ENCODE measurements at regions of chr16 and their contacts with region 1.

Region 1: DNA sequence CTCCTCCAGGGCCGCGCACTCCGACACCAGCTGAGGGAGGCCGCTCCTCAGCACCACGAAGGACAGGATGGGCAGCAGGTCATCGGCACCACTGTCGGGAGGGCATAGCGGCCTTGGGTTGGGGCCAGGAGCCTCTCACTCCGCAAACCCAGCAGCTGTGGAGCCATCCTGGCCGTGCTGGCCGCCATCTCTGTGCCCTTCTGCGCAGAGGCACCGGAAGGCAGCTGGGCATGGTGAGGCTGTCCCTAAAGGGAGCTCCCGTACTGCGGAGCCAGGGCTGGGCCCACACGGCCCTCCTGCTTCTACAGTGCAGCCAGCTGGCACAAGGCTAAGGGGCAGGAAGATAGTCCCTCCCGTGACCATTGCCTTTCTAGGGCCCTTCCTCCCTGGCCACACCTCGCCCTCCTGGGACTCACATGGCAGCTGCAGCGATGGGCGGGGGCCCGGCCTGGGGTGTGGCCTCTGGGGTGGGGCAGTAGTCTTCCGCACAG is 7.0 kb upstream of the SPATA2L start:
- DNase-seq: no peak
- ATAC-seq: peak in 4 of 8 donors; percentile 1 to 56 (median 12)
- H3K4me3 ChIP-seq: no peak overlapping the region
- H3K27ac ChIP-seq: no peak overlapping the region
- H3K4me1 ChIP-seq: peaks cover 0 to 20% (median 11%) of the 10 kb centered on the region in 9 donors
- H3K27me3 ChIP-seq: peaks cover 0 to 12% (median 6%) of the 10 kb centered on the region in 7 donors
- CTCF ChIP-seq: no peak

Region 2: DNA sequence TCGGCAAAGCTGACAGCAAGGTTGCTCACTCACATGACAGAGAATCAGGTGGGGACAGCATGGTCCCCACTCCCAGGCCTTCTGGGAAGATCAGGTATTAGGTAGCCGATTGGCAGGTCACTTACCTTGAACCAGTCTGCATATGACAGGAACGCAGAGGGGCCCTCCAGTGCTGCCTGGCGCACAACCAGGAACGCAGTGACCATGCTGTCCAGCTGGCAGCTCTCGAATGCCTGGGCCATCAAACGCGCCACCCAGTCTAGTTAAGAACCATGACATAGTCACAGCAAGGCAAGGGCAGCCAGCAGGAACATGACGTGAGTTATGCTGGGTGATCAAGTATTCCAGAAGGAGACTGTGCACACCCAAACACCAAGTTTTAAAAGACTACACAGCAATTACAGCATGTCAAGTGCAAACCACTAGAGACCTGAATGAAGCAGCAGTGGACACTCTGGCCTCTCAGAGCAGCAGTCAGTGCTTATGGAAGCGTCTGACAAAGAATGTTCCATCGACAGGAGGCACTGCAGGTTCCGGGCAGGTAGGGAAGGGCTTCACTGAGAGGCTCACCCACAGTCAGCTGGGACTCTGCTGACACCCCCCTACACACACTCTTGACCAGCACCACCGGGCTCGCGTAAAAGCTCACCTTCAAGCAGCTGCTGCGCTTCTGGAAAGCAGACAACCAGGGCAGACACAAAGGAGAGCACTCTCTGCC is 83.0 kb after region 1 on chr16:
- intact Hi-C with region 1: loop called in 9 of 10 experiments (anchors 5 to 10 kb)
- DNase-seq: peak in 1 of 2 donors; percentile 26
- ATAC-seq: peak in 6 of 8 donors; percentile 18 to 75 (median 44)
- H3K4me3 ChIP-seq: no peak overlapping the region
- H3K27ac ChIP-seq: no peak overlapping the region
- H3K4me1 ChIP-seq: peaks cover 0 to 3% (median 0%) of the 10 kb centered on the region in 9 donors
- H3K27me3 ChIP-seq: no peaks in the 10 kb centered on the region
- CTCF ChIP-seq: no peak

Region 3: DNA sequence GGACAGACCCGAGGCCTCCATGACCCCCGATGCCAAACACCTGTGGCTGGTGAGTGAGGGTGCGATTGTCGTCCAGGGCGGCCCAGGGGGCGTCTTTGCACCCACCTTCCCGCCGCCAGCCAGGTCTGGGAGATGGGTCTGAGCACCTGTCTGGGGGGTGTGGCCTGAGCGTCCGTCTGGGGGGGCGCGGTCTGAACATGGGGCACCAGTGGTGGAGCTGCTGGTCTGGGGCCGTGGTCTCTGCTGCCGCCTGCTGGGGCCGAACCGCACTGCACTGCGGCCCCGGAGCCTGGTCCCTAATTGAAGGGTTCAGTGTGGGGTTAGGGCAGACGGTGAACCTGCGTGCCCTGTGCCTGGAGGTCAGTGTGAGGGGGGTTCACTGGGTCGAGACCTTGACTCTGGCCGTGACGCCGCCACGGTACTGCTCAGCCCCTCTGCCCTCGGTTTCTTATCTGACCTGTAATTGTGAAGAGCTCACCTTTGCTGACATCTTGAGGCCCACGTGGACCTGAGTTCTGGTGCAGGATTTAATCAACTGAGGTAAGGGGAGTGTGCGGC is 152.3 kb after region 1 on chr16:
- intact Hi-C with region 1: loop called in 5 of 10 experiments (anchors 2 to 10 kb)
- DNase-seq: peak; percentile 49 to 71
- ATAC-seq: peak; percentile 64 to 81 (median 78)
- H3K4me3 ChIP-seq: no peak overlapping the region
- H3K27ac ChIP-seq: no peak overlapping the region
- H3K4me1 ChIP-seq: peaks cover 0 to 32% (median 21%) of the 10 kb centered on the region in 9 donors
- H3K27me3 ChIP-seq: no peaks in the 10 kb centered on the region
- CTCF ChIP-seq: peak; percentile 91 to 98 (median 96)